Ascending aorta (tissue), 2 donors: ENCODE measurements at regions of chr3 and their contacts with region 1.

Region 1: GRCh38 chr3:29430558-29430971 is 149.7 kb downstream of the RBMS3 start:
- DNase-seq: no peak
- H3K4me3 ChIP-seq: no peak overlapping the region
- H3K27ac ChIP-seq: peak overlapping the region; percentile 56 to 59
- H3K4me1 ChIP-seq: peaks cover 0 to 44% of the 10 kb centered on the region in 2 donors
- H3K27me3 ChIP-seq: no peaks in the 10 kb centered on the region
- CTCF ChIP-seq: no peak

Region 2: DNA sequence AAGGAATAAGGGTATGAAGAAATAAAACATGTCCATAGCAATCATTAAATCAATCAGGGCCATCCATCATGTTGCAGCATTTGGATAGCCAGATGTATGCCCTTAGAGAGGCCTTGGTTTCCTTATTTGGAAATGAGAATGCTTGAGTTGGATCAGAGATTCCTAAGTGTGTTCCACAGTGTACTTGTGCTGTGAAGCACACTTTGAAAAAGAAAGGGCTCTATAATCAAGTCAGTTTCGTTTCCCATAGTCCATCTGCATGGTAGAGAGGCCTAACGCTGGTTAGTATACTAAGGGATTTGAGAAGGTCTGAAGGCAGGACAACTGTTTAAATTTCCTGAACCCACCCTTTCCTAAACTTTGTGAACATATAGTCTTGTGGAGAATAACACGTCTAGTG is 118.8 kb before region 1 on chr3:
- intact Hi-C with region 1: no loop called
- DNase-seq: no peak
- H3K4me3 ChIP-seq: peak overlapping the region in 1 of 2 donors; percentile 21
- H3K27ac ChIP-seq: peak overlapping the region in 1 of 2 donors; percentile 15
- H3K4me1 ChIP-seq: peaks cover 7 to 42% of the 10 kb centered on the region in 2 donors
- H3K27me3 ChIP-seq: no peaks in the 10 kb centered on the region
- CTCF ChIP-seq: no peak

Region 3: GRCh38 chr3:29447946-29448627 is 17.5 kb after region 1 on chr3:
- intact Hi-C with region 1: loop called (anchors 2 kb)
- DNase-seq: no peak
- H3K4me3 ChIP-seq: no peak overlapping the region
- H3K27ac ChIP-seq: no peak overlapping the region
- H3K4me1 ChIP-seq: peaks cover 1 to 6% of the 10 kb centered on the region in 2 donors
- H3K27me3 ChIP-seq: no peaks in the 10 kb centered on the region
- CTCF ChIP-seq: no peak

Region 4: GRCh38 chr3:29494305-29495036 is 63.9 kb after region 1 on chr3:
- intact Hi-C with region 1: loop called (anchors 10 kb)
- DNase-seq: no peak
- H3K4me3 ChIP-seq: no peak overlapping the region
- H3K27ac ChIP-seq: peak overlapping the region in 1 of 2 donors; percentile 17
- H3K4me1 ChIP-seq: no peaks in the 10 kb centered on the region
- H3K27me3 ChIP-seq: no peaks in the 10 kb centered on the region
- CTCF ChIP-seq: no peak

Region 5: DNA sequence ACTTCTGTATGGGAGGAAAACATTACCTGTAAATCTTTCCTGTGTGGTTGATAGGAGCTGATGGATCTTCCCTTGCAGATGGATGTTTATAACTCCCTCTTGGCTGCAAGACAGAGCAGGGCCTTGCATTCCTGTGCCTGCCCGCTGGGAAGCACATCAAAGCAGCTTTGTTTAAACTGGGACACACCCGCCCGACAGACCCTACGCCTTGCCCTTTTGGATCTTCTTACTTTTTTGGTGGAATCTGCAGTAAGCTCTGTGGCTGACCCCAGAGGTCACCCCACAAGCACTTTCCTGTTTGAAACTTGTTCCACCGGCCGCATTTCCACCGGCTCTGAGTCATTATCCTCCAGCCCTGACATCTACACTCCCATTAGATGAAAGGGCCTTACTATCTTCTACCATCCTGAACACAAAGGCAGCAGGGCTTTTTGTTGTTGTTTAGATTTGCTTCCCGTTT is 1858.1 kb after region 1 on chr3:
- intact Hi-C with region 1: loop called (anchors 10 kb)
- DNase-seq: no peak
- H3K4me3 ChIP-seq: no peak overlapping the region
- H3K27ac ChIP-seq: no peak overlapping the region
- H3K4me1 ChIP-seq: no peaks in the 10 kb centered on the region
- H3K27me3 ChIP-seq: no peaks in the 10 kb centered on the region
- CTCF ChIP-seq: no peak